SK-N-SH (cell line): ENCODE measurements at regions of chrX and their contacts with region 1.

Region 1: DNA sequence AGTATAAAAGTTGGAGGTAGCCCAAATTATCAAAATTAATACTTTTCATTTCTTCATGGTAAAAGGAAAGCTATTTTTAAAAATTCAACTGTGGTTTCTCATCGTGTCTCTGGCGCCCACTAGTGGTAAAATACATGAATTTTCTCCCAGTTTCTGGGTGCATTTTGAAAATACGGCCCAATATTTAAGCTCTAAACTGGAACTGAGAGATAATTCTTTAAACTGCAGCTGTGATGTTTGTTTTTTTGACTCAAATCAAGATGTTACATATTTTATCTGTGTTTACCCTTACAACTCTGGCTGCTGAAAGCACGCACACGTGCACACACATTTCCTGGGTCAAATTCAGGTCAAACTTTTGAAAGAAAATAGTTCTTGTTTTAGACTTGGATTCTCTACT is 123.9 kb upstream of the ACSL4 start:
- DNase-seq: peak; percentile 19
- H3K4me3 ChIP-seq: no peak overlapping the region; a peak in 1 of 4 replicates
- H3K27ac ChIP-seq: no peak overlapping the region
- H3K4me1 ChIP-seq: 0 out of 4 replicates have a peak, but pooled peaks cover 0 to 6% of the 10 kb centered on the region in 2 experiments
- H3K27me3 ChIP-seq: no peaks in the 10 kb centered on the region
- CTCF ChIP-seq: peak; percentile 94
- EP300 ChIP-seq: no peak
- RAD21 ChIP-seq: peak; percentile 73

Region 2: DNA sequence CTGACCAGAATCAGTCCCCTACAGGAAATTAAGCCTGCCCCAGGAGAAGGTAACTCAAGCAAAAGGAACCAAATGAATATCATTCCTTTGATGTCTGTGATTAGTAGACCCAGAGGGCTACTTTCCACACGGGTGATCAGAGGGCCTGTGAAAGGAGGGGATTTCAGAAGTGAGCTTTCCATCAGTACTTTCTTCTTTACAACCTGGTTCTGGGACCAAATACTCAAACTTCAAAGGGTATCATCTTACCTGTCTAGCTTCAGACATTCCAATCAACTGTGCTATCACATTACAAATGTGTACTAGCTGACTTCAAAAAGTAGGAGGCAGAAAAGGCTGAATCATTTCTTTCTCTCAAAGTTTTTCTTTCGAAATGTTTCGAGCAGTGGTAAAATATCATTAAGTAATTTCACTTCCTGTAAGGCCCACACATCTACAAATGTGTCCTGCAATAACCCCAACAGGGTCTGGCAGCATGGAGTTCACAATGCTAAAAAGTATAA is 147.8 kb before region 1 on chrX:
- CTCF ChIA-PET with region 1: interaction called, 105 read pairs
- POLR2A ChIA-PET with region 1: no interaction called
- DNase-seq: no peak
- H3K4me3 ChIP-seq: no peak overlapping the region
- H3K27ac ChIP-seq: peak overlapping the region in 1 of 2 experiments; percentile 22; a peak in 1 of 4 replicates
- H3K4me1 ChIP-seq: peaks cover 0 to 13% of the 10 kb centered on the region in 2 experiments; a peak in 1 of 4 replicates
- H3K27me3 ChIP-seq: peaks cover 4% of the 10 kb centered on the region; the same call in 1 of the 2 replicates
- CTCF ChIP-seq: no peak
- EP300 ChIP-seq: no peak
- RAD21 ChIP-seq: no peak

Region 3: GRCh38 chrX:109732780-109733657 is 124.0 kb before region 1 on chrX and contains the start of gene ACSL4:
- CTCF ChIA-PET with region 1: interaction called, 12 read pairs
- POLR2A ChIA-PET with region 1: no interaction called
- DNase-seq: peak; percentile 88
- H3K4me3 ChIP-seq: peak within 1 kb of the TSS; percentile 70 to 77
- H3K27ac ChIP-seq: peak within 1 kb of the TSS; percentile 79 to 81
- H3K4me1 ChIP-seq: no peaks in the 10 kb centered on the region; a peak in 1 of 4 replicates
- H3K27me3 ChIP-seq: no peaks in the 10 kb centered on the region
- CTCF ChIP-seq: no peak
- EP300 ChIP-seq: no peak
- RAD21 ChIP-seq: no peak
- polyA plus RNA-seq, gene ACSL4: 17.5 and 18.1 TPM in 2 replicates

Region 4: GRCh38 chrX:109840585-109840984 is 16.4 kb before region 1 on chrX:
- CTCF ChIA-PET with region 1: interaction called, 28 read pairs
- POLR2A ChIA-PET with region 1: no interaction called
- DNase-seq: no peak
- H3K4me3 ChIP-seq: no peak overlapping the region
- H3K27ac ChIP-seq: peak overlapping the region in 1 of 2 experiments; percentile 79; a peak in 2 of 4 replicates
- H3K4me1 ChIP-seq: peaks cover 2 to 11% of the 10 kb centered on the region in 2 experiments; a peak in 1 of 4 replicates
- H3K27me3 ChIP-seq: no peaks in the 10 kb centered on the region
- CTCF ChIP-seq: no peak
- EP300 ChIP-seq: peak in 1 of 2 experiments; percentile 58; a peak in 1 of 4 replicates
- RAD21 ChIP-seq: no peak

Region 5: GRCh38 chrX:109880629-109881028 is 23.7 kb after region 1 on chrX:
- CTCF ChIA-PET with region 1: interaction called, 14 read pairs
- POLR2A ChIA-PET with region 1: no interaction called
- DNase-seq: no peak
- H3K4me3 ChIP-seq: no peak overlapping the region
- H3K27ac ChIP-seq: no peak overlapping the region
- H3K4me1 ChIP-seq: no peaks in the 10 kb centered on the region
- H3K27me3 ChIP-seq: no peaks in the 10 kb centered on the region; the same call in 1 of the 2 replicates
- CTCF ChIP-seq: no peak
- EP300 ChIP-seq: no peak
- RAD21 ChIP-seq: no peak

Region 6: GRCh38 chrX:109990582-109991276 is 133.8 kb after region 1 on chrX:
- CTCF ChIA-PET with region 1: no interaction called
- POLR2A ChIA-PET with region 1: no interaction called
- DNase-seq: no peak
- H3K4me3 ChIP-seq: no peak overlapping the region
- H3K27ac ChIP-seq: no peak overlapping the region
- H3K4me1 ChIP-seq: no peaks in the 10 kb centered on the region
- H3K27me3 ChIP-seq: peaks cover 4% of the 10 kb centered on the region; the same call in 1 of the 2 replicates
- CTCF ChIP-seq: no peak
- EP300 ChIP-seq: no peak
- RAD21 ChIP-seq: no peak